PC-9 (cell line): ENCODE measurements at regions of chr2 and their contacts with region 1.

Region 1: GRCh38 chr2:176554101-176555048 is 285.1 kb downstream of the MTX2 start:
- DNase-seq: peak; percentile 53 to 54
- H3K4me3 ChIP-seq: peak overlapping the region; percentile 58
- H3K27ac ChIP-seq: no peak overlapping the region
- H3K4me1 ChIP-seq: no peaks in the 10 kb centered on the region
- H3K27me3 ChIP-seq: no peaks in the 10 kb centered on the region; the same call in 1 of the 2 replicates
- CTCF ChIP-seq: peak; percentile 100

Region 2: GRCh38 chr2:176126929-176127773 is 427.2 kb before region 1 on chr2:
- CTCF ChIA-PET with region 1: interaction called, 14 read pairs
- POLR2A ChIA-PET with region 1: no interaction called
- intact Hi-C with region 1: loop called (anchors 1 kb)
- DNase-seq: peak; percentile 43 to 67
- H3K4me3 ChIP-seq: 0 out of 2 replicates have a peak overlapping the region, but pooled peaks have one; percentile 3
- H3K27ac ChIP-seq: no peak overlapping the region
- H3K4me1 ChIP-seq: no peaks in the 10 kb centered on the region
- H3K27me3 ChIP-seq: peaks cover 52% of the 10 kb centered on the region
- CTCF ChIP-seq: peak; percentile 100

Region 3: GRCh38 chr2:176269319-176270099 is 284.9 kb before region 1 on chr2 and contains the start of gene MTX2:
- CTCF ChIA-PET with region 1: interaction called, 5 read pairs
- POLR2A ChIA-PET with region 1: no interaction called
- intact Hi-C with region 1: loop called (anchors 10 kb)
- DNase-seq: peak; percentile 70 to 85
- H3K4me3 ChIP-seq: peak within 1 kb of the TSS; percentile 72
- H3K27ac ChIP-seq: peak within 1 kb of the TSS; percentile 67
- H3K4me1 ChIP-seq: peaks cover 19% of the 10 kb centered on the region
- H3K27me3 ChIP-seq: no peaks in the 10 kb centered on the region
- CTCF ChIP-seq: 0 out of 2 replicates have a peak, but pooled peaks have one; percentile 32
- total RNA-seq, gene MTX2: 48.5 and 53.9 TPM in 2 replicates

Region 4: GRCh38 chr2:176454893-176455811 is 99.2 kb before region 1 on chr2:
- CTCF ChIA-PET with region 1: interaction called, 25 read pairs
- POLR2A ChIA-PET with region 1: no interaction called
- intact Hi-C with region 1: loop called (anchors 1 kb)
- DNase-seq: peak; percentile 44 to 80
- H3K4me3 ChIP-seq: no peak overlapping the region
- H3K27ac ChIP-seq: no peak overlapping the region
- H3K4me1 ChIP-seq: no peaks in the 10 kb centered on the region
- H3K27me3 ChIP-seq: no peaks in the 10 kb centered on the region
- CTCF ChIP-seq: peak; percentile 100

Region 5: DNA sequence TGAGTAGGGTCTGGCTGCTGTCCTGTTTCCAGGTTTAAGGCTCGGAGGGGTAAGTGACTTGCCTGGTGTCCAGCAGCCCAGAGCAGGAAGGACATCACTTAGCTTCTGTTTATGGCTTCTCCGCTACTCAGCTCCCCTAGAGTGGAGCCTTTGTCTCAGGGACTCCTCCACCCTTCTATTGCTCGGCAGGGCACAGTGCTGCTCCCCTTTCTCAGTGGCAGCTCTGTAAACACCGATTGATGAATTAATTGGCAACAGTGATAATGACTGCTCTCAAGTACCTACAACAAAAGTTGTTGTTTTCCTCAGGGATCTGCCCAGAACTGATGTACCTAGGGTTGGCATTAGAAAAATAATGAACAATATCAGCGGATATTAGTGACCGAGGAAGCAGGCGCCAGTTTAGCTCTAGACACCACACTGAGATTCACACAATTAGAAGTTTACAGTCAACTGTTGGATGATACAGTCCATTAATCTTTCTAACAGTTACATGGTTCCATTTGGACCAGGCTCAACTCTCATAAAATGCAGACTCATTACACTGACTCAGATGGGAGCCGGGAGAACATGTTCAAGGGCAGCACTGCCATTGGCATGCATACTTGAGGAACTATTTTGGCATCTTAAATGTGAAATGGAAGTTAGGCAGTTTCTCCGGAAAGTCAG is 19.4 kb before region 1 on chr2:
- CTCF ChIA-PET with region 1: interaction called, 12 read pairs
- POLR2A ChIA-PET with region 1: interaction called, 3 read pairs
- intact Hi-C with region 1: no loop called
- DNase-seq: no peak
- H3K4me3 ChIP-seq: no peak overlapping the region
- H3K27ac ChIP-seq: no peak overlapping the region
- H3K4me1 ChIP-seq: peaks cover 5% of the 10 kb centered on the region; the same call in 1 of the 2 replicates
- H3K27me3 ChIP-seq: no peaks in the 10 kb centered on the region
- CTCF ChIP-seq: no peak

Region 6: GRCh38 chr2:176574484-176575236 is 20.3 kb after region 1 on chr2:
- CTCF ChIA-PET with region 1: no interaction called
- POLR2A ChIA-PET with region 1: no interaction called
- intact Hi-C with region 1: no loop called
- DNase-seq: no peak
- H3K4me3 ChIP-seq: no peak overlapping the region
- H3K27ac ChIP-seq: no peak overlapping the region
- H3K4me1 ChIP-seq: no peaks in the 10 kb centered on the region
- H3K27me3 ChIP-seq: no peaks in the 10 kb centered on the region
- CTCF ChIP-seq: no peak